G401 (cell line): ENCODE measurements at regions of chr17 and their contacts with region 1.

Region 1: DNA sequence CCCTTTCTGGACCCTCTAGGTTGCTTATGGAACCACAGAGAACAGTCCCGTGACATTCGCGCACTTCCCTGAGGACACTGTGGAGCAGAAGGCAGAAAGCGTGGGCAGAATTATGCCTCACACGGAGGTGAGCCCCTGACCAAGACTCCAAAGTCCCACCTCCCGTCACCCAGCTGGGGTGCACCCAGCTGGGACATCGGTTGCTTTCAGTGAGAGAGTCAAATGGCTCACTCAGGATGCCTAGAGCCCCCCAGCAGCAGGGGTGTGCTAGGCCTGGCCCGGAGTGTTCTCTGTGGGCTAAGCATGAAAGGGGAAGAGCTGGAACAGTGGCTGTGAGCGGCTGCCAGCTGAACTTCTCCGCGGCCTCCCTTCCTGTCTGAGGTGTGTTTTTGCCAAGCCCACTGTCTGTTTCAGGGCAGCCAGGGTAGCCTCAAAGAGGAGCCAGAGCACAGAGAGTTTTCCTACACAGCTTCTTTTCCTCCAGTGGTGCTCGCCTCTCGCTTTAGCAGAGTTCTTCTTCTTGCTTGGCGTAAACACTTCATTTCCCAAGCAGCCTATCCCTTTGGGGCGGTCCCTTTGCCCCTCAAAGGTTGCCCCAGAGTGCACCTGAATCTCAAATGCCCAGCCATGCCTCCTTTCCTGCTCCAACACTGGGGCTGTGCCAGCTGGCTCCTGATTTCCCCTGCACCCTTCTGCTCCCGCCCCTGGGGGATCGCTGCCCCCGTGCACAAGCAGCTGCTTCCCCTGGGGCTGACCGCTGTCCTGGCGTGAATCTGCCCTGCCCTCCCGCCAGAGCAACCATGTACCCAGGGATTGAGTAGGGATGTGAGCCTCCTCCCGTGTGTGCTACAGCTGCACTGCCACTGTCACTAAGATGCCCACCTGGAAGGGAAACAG is 2.6 kb upstream of the CHAD start:
- DNase-seq: peak; percentile 40

Region 2: GRCh38 chr17:50425682-50426471 is 45.4 kb before region 1 on chr17 and contains the start of gene ACSF2:
- in situ Hi-C with region 1: loop called (anchors 5 kb)
- DNase-seq: no peak
- total RNA-seq, gene ACSF2: 58.8 and 69.4 TPM in 2 replicates